Activated CD4-positive, alpha-beta memory T cell treated with anti-CD3 and anti-CD28 coated beads for 36 hours (primary cell): ENCODE measurements at regions of chr1 and their contacts with region 1.

Region 1: DNA sequence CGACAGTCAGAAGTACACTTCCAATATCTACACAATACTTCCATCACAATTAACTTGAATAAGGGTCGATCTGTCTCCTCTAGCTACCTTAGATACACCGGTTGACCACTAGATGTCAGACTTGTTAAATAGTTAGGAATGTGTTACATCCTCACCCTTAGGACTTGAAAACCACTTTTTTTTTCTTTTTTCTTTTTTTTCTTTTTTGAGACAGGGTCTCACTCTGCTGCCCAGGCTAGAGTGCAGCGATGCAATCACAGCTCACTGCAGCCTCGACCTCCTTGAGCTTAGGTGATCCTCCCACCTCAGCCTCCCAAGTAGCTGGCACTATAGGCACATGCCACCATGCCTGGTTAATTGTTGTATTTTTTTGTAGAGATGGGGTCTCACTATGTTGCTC is 120.4 kb upstream of the GREM2 start:
- DNase-seq: no peak
- H3K4me3 Mint-ChIP-seq: no peak overlapping the region
- H3K27ac Mint-ChIP-seq: no peak overlapping the region
- H3K4me1 Mint-ChIP-seq: no peaks in the 10 kb centered on the region
- H3K27me3 Mint-ChIP-seq: no peaks in the 10 kb centered on the region

Region 2: DNA sequence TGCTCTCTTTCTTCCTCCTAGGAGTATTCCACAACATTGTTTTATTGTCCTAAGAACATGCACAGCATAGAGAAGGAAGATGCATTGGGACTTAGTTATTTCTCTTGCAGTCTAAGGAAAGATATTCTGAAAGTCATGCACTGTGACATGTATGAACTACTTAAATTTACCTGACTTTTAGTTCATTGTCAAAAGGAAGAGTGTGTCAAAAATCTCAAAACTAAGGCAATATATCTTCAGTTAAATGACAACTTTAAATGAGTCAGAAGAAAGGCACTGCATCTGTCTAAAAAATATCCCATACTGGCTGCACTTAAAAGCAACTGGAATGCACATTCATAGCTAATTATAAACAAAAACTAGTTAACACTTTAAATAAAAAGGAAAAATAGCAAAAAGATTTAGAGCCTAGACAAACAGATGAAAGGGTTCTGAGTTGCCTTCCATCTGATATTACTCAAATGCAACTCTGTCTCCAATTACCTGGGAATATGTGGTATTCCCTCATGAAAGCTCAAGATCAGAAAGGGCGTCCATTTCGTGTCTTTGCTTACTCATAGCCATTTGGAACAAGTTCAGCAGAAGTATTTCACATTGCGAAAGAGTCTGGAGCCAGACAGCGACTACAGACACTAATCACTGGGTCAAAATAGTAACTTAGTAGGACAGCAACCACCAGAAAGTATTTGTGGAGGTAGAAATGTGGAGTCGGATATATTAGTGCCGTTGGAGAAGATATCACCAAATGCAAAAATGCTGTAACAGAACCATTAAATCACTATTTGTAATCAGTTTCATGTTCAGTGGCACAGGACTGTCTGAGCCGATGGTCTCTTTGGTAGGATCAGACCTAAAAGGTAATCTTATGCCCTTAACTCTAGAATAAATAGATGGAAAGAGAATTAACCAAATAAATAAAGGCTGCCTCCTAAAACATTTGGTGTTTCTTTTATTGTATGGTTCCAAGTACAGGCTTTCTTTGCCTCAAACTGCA is 346.1 kb before region 1 on chr1:
- CTCF ChIA-PET with region 1: no interaction called
- POLR2A ChIA-PET with region 1: no interaction called
- intact Hi-C with region 1: no loop called
- DNase-seq: no peak
- H3K4me3 Mint-ChIP-seq: no peak overlapping the region
- H3K27ac Mint-ChIP-seq: no peak overlapping the region
- H3K4me1 Mint-ChIP-seq: no peaks in the 10 kb centered on the region
- H3K27me3 Mint-ChIP-seq: no peaks in the 10 kb centered on the region

Region 3: DNA sequence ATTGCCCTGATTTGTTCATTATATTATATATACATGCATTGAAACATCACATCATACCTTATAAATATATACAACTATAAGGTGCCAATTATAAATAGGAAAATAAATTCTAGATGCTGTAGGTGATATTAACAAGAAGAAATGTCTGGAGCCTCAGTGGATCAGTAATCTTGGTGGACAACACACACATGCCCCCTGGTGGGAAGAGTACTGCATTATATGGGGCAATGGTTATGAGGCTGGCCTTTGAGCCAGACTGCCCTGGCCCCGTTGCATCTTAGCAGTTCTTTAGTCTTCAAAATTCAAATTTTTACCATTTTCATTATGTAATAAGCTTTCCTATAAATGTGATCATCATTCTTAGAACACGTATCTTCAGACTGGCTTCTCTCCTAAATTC is 214.5 kb after region 1 on chr1:
- CTCF ChIA-PET with region 1: interaction called, 3 read pairs
- POLR2A ChIA-PET with region 1: no interaction called
- intact Hi-C with region 1: loop called (anchors 2 kb)
- DNase-seq: no peak
- H3K4me3 Mint-ChIP-seq: no peak overlapping the region
- H3K27ac Mint-ChIP-seq: no peak overlapping the region
- H3K4me1 Mint-ChIP-seq: no peaks in the 10 kb centered on the region
- H3K27me3 Mint-ChIP-seq: no peaks in the 10 kb centered on the region